Psoas muscle (tissue), 8 donors: ENCODE measurements at regions of chr4 and their contacts with region 1.

Region 1: GRCh38 chr4:113311047-113311446 is 261.6 kb downstream of the ANK2 start:
- DNase-seq: no peak
- ATAC-seq: no peak
- H3K4me3 ChIP-seq: no peak overlapping the region
- H3K27ac ChIP-seq: no peak overlapping the region
- H3K4me1 ChIP-seq: no peaks in the 10 kb centered on the region
- H3K27me3 ChIP-seq: no peaks in the 10 kb centered on the region
- CTCF ChIP-seq: no peak

Region 2: DNA sequence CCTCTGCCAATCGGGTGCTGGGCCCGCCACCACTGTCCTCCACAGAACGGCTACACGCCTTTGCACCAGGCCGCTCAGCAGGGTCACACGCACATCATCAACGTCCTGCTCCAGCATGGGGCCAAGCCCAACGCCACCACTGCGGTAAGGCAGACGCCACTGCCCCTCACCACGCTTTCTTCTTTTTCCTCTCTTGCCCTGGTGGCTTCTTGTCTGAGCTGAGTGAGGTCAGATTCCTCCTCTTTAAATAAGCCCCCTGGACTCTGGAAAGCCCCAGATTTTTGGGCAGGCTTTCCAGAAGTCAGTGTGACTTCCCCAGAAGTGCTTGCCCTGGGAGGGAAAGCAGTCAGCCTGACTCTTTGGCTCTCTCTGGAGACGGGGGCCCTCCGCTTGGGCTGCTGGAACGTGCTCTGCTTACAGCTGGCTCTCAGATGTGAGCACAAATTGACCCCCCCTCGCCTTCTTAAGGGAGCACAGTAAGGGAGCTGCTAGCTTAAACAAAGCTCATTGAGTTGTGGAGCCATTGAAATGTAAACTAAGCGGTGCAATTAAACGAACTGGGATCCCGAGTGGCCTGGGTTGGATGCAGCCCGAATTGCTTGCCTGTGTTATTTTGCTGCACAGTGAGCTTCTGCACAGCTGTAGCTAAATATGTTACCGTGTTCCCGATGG is 18.5 kb before region 1 on chr4:
- intact Hi-C with region 1: loop called in 1 of 2 experiments (anchors 2 kb)
- DNase-seq: peak; percentile 24 to 54
- ATAC-seq: peak in 3 of 4 donors; percentile 23 to 59 (median 53)
- H3K4me3 ChIP-seq: peak overlapping the region; percentile 29
- H3K27ac ChIP-seq: no peak overlapping the region
- H3K4me1 ChIP-seq: no peaks in the 10 kb centered on the region
- H3K27me3 ChIP-seq: no peaks in the 10 kb centered on the region
- CTCF ChIP-seq: no peak

Region 3: DNA sequence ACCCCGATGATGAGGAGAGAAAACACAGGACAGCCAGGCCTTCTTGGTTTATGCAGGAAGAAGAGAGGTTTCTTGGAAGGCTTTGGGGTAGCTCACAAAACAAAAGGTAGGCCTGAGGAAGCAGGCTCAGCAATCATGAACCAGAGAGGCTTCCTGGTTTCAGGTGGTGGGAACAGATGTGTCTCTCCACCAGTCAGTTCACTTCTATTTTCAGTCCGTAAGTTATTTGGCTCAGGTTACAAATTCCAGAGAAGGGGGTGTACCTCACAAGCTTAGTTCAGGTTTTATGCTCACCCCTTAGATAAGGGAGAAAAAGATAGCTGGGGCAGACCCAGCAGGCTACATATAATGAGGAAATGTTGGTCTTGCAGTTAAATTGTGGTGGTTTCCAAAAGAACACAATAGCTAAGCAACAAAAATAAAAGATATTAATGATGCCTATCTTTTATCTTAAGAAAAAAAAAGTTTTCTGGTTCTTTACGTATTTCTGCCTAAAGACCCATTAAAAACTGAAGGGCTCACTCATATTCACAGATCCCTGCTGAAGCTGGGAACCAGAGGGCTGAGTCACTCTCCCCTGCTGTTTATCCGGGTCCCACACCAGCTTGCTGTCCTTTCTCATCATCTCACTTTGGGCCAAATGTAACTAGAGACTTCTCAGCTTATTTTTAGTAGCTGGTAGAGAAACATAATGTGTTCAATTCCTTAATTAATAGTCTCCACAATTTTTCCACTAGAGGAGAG is 273.5 kb after region 1 on chr4:
- intact Hi-C with region 1: no loop called
- DNase-seq: peak in 1 of 2 donors; percentile 57
- ATAC-seq: peak; percentile 82 to 95 (median 91)
- H3K4me3 ChIP-seq: peak overlapping the region; percentile 29
- H3K27ac ChIP-seq: peak overlapping the region; percentile 89
- H3K4me1 ChIP-seq: peaks cover 57% of the 10 kb centered on the region
- H3K27me3 ChIP-seq: no peaks in the 10 kb centered on the region
- CTCF ChIP-seq: no peak